ENCODE measurements at regions of chr15 and their contacts with region 1.

Region 1: DNA sequence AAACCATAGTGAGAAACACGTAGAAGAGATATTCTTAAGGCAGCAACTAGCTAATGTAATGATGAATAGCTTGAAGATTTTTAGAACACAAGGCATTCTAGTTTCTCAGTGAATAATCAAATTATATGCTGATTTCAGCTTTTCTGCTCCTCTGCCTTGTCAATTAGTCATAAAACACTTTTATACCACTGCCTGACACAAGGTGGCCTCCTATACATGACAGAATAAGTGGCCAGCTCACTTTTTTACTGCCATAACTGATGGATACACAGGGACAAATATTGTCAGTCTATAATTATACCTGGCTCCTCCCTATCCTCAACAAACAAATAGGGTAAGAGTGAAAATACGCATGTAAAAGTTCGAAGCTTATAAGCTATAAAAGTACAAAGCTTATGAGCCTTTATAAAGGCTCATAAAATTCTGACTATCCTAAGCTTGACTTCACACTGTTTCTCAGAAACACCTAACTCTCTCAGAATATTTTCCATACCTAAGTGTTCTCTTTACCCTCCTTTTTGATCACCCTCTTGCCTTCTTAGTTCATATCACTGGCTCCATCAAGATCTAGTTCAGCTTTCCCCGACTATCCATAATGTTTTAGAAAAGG is 81.6 kb downstream of the HERC1 start:
- DNase-seq: no peak
- ATAC-seq: peak; percentile 92
- H3K4me3 ChIP-seq: no peak overlapping the region
- H3K27ac ChIP-seq: no peak overlapping the region
- H3K4me1 ChIP-seq: no peaks in the 10 kb centered on the region
- H3K27me3 ChIP-seq: no peaks in the 10 kb centered on the region
- CTCF ChIP-seq: peak; percentile 68

Region 2: DNA sequence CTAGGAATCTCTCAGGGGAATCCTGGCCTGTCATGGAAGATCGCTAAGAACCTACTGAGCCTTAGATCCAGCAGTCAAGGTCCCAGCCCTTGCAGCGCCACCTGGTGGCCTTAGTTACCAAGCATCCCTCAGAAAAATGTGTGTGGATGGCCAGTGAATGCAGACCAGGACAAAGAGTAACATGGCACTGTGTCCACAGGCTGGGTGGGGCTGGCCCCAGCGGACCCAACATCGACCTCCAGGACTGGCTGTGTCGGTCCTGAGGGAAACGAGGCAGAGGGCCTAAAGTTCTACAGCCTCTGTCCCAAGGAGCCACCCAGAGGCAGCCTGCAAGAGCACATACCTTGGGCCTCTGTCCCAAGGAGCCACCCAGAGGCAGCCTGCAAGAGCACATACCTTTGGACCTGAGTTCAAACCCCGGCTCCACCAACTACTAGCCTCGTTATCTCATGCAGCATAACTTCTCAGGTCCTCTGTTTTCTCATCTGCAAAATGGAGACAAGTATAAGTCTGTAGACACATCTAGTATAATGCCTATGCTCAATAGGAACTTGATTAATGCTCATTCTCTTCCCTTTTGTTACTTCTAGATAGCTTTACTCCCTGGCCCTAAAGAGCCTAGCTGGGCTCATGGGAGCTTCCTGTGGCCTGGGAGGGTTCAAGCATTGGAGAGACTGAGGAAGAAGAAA is 139.0 kb after region 1 on chr15:
- intact Hi-C with region 1: loop called (anchors 10 kb)
- DNase-seq: peak; percentile 87
- ATAC-seq: peak; percentile 83
- H3K4me3 ChIP-seq: no peak overlapping the region
- H3K27ac ChIP-seq: no peak overlapping the region
- H3K4me1 ChIP-seq: peaks cover 19% of the 10 kb centered on the region
- H3K27me3 ChIP-seq: no peaks in the 10 kb centered on the region
- CTCF ChIP-seq: peak; percentile 90

Region 3: GRCh38 chr15:64067564-64068030 is 315.4 kb after region 1 on chr15:
- intact Hi-C with region 1: loop called (anchors 5 kb)
- DNase-seq: no peak
- ATAC-seq: peak; percentile 91
- H3K4me3 ChIP-seq: no peak overlapping the region
- H3K27ac ChIP-seq: no peak overlapping the region
- H3K4me1 ChIP-seq: peaks cover 26% of the 10 kb centered on the region
- H3K27me3 ChIP-seq: no peaks in the 10 kb centered on the region
- CTCF ChIP-seq: peak; percentile 84